ENCODE measurements at regions of chr1 and their contacts with region 1.

Region 1: DNA sequence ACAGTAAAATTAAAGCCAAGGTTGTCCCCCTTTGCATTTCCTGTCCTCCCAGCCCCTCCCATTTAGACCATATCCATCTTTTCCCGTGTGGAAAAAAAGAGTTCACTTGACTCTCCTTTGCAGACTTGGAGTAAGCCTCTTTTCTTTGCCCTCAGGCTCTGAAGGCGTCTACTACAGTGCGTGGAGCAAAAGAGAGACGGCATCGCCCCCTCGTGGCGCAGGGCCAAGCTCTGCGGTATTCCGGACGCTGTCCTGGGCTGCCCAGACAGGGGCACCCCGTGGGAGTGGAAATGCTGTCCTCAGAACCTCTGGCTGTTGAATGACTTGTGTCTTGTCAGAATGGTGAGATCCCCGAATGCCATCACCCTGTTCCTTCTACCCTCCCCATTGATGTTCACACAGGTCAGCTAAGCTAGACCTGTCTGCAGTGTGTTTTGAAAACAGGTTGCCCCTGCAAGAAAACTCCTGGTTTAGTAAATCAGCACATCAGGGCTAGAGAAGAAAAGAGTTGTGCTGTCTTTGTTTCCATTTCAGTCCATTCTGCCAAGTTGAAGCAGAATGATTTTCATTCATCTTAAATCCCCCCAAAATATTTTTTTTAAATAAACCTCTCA is 12.3 kb upstream of the GJA8 start:
- DNase-seq: peak; percentile 71 to 92
- H3K4me3 ChIP-seq: no peak overlapping the region
- H3K4me1 ChIP-seq: no peaks in the 10 kb centered on the region
- H3K27me3 ChIP-seq: no peaks in the 10 kb centered on the region

Region 2: DNA sequence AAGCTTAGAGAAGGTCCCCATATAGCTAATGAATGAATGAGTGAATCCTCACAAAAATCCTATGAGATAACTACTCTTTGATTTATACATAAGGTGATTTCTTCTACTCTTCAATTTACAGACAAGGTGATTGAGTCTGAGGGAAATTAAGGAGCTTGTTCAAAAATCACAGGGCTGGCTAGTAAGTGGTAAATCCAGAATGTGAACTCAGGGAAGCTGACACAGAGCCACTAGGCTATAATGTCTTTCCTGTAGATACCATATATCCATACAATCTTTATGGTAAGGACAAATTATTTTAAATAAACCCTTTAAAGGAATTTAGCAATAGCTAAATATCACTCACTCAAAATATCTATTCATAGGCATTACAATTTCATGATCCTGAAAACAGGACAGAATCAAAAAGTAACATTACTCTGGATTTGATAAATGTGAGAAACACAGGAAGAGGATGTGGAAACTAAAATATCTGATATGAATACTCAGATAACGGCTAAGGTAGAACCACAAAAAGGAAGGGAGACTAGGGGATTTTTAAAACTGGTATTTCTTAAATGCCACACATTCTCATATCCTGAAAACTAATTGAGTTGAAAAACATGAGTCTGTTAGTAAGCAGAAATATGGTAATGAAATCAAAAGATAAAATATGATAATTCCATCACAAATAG is 844.0 kb before region 1 on chr1:
- in situ Hi-C with region 1: no loop called
- DNase-seq: no peak
- H3K4me3 ChIP-seq: no peak overlapping the region
- H3K4me1 ChIP-seq: no peaks in the 10 kb centered on the region
- H3K27me3 ChIP-seq: no peaks in the 10 kb centered on the region; the same call in 1 of the 2 replicates

Region 3: GRCh38 chr1:147292631-147293251 is 597.5 kb before region 1 on chr1:
- in situ Hi-C with region 1: loop called (anchors 25 kb)
- DNase-seq: no peak
- H3K4me3 ChIP-seq: no peak overlapping the region
- H3K4me1 ChIP-seq: no peaks in the 10 kb centered on the region
- H3K27me3 ChIP-seq: no peaks in the 10 kb centered on the region

Region 4: DNA sequence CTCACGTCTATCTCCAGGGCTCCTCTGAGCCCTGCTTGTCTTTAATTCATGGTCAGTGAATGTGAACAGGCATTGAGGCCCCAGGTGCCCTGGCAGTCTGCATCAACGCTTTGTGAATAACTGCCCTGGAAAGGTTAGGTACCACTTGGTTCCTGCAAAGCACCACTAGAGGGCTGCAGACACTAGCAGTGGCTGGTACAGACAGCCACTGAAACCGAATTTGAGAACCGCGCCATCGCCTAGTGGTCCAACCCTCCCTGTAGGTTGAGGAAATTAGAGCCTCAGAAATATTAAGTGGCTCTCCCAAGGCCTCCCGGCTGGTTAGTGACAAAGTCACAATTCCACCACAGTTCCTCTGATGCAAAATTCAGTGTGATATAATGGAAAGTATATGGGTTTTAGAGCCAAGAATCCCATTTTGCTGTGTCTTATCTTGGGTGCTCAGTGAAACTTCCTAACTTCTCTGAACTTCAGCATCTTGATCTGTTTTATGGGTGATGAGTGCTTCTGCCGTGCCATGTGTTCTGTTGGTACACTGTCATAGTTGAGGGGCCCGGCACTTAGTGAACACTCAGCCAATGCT is 395.2 kb before region 1 on chr1:
- in situ Hi-C with region 1: loop called (anchors 10 kb)
- DNase-seq: peak; percentile 79 to 84
- H3K4me3 ChIP-seq: no peak overlapping the region
- H3K4me1 ChIP-seq: peaks cover 9% of the 10 kb centered on the region
- H3K27me3 ChIP-seq: peaks cover 4% of the 10 kb centered on the region; the same call in 1 of the 2 replicates

Region 5: GRCh38 chr1:147640553-147641165 is 249.6 kb before region 1 on chr1:
- in situ Hi-C with region 1: loop called (anchors 5 kb)
- DNase-seq: peak; percentile 81 to 93
- H3K4me3 ChIP-seq: no peak overlapping the region
- H3K4me1 ChIP-seq: no peaks in the 10 kb centered on the region
- H3K27me3 ChIP-seq: no peaks in the 10 kb centered on the region

Measured in HAP-1 (cell line).